ENCODE measurements at regions of chr2 and their contacts with region 1.

Region 1: GRCh38 chr2:218466016-218466521 is 47.1 kb downstream of the VIL1 start:
- DNase-seq: no peak
- ATAC-seq: no peak
- H3K4me3 ChIP-seq: no peak overlapping the region
- H3K27ac ChIP-seq: no peak overlapping the region
- H3K4me1 ChIP-seq: no peaks in the 10 kb centered on the region
- H3K27me3 ChIP-seq: no peaks in the 10 kb centered on the region
- CTCF ChIP-seq: peak in 4 of 5 experiments; percentile 27 to 47 (median 41)
- POLR2A ChIP-seq: no peak

Region 2: GRCh38 chr2:218307415-218308090 is 158.5 kb before region 1 on chr2:
- in situ Hi-C with region 1: loop called in 3 of 4 experiments (anchors 5 to 25 kb)
- intact Hi-C with region 1: no loop called
- DNase-seq: no peak
- ATAC-seq: no peak
- H3K4me3 ChIP-seq: no peak overlapping the region
- H3K27ac ChIP-seq: no peak overlapping the region
- H3K4me1 ChIP-seq: no peaks in the 10 kb centered on the region
- H3K27me3 ChIP-seq: no peaks in the 10 kb centered on the region
- CTCF ChIP-seq: no peak
- POLR2A ChIP-seq: no peak

Region 3: DNA sequence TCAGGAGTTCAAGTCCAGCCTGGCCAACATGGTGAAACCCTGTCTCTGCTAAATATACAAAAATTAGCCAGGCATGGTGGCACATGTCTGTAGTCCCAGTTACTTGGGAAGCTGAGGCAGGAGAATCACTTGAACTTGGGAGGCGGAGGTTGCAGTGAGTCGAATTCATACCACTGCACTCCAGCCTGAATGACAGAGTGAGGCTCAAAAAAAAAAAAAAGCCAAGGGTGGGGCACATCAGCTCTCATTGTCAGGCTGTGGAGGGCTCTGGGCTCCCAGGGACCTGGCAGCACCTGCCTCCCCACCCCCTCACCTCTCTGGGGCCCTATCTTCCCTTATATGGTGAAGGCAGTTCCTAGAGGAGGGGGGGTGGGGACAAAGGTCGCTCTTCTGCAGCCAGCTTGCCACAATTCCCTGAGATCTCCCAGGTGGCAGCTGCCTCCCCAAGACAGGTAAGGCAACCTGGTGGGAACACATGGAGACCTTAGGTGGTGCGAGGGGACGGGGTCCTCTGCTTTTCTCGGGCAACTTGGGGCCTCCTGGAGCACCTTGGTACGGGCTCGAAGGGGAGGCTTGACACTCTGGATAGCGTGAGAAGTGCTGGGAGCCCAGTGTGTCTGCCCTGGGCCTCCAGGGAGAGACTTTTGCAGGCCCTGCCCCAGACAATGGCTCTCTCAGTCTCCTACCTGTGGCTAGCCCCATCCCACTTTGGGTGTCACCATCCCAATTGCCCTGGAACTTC is 47.2 kb before region 1 on chr2 and contains the start of gene VIL1:
- in situ Hi-C with region 1: loop called in 1 of 4 experiments (anchors 10 kb)
- intact Hi-C with region 1: no loop called
- DNase-seq: no peak
- ATAC-seq: no peak
- H3K4me3 ChIP-seq: no peak within 1 kb of the TSS
- H3K27ac ChIP-seq: no peak within 1 kb of the TSS
- H3K4me1 ChIP-seq: no peaks in the 10 kb centered on the region
- H3K27me3 ChIP-seq: no peaks in the 10 kb centered on the region
- CTCF ChIP-seq: no peak
- POLR2A ChIP-seq: no peak
- total RNA-seq, gene VIL1: 0.03 to 1.8 TPM in 2 of 4 donors, not detected in the others

Measured in gastrocnemius medialis (tissue), 4 donors.